Natural killer cell (primary cell): ENCODE measurements at regions of chr4 and their contacts with region 1.

Region 1: GRCh38 chr4:186587416-186588018 is 32.1 kb upstream of the MTNR1A start:
- DNase-seq: peak; percentile 25 to 69
- ATAC-seq: peak in 2 of 3 donors; percentile 58 to 71
- H3K4me3 ChIP-seq: no peak overlapping the region
- H3K4me3 Mint-ChIP-seq: no peak overlapping the region
- H3K27ac ChIP-seq: no peak overlapping the region
- H3K27ac Mint-ChIP-seq: no peak overlapping the region
- H3K4me1 ChIP-seq: no peaks in the 10 kb centered on the region
- H3K4me1 Mint-ChIP-seq: no peaks in the 10 kb centered on the region
- H3K27me3 ChIP-seq: no peaks in the 10 kb centered on the region
- H3K27me3 Mint-ChIP-seq: no peaks in the 10 kb centered on the region
- CTCF ChIP-seq: peak; percentile 82

Region 2: DNA sequence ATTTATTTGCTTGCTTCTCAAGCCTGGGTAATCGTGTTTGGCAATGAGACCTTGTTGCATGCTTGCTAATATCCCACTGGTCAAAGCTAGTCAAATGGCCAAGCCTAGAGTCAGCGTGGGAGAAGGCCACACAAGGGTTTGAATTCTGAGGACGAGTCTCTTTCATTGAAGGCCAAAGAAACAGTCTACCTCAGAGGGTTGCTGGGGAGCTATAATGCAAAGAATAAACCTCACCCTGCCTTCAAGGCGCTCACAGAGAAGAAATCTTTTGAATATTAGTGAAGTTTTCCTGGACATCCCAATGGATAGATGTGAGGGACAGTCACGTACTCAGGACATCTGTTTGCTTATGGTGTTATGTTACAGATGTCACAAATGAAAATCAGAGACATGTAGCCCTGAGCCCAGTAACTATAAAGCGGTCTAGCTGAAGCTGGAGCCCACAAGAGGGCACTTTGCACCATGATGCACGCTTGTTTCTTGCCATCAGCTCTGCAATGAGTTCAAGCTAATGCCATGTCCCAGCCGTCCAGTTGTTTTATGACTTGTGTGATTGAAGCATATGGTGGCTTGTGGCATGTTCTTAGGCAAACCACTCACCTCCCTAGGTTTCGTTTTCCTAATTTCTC is 519.6 kb before region 1 on chr4:
- intact Hi-C with region 1: loop called (anchors 1 kb)
- DNase-seq: peak; percentile 25 to 60
- ATAC-seq: peak; percentile 75 to 89 (median 86)
- H3K4me3 ChIP-seq: peak overlapping the region; percentile 42
- H3K4me3 Mint-ChIP-seq: peak overlapping the region; percentile 83
- H3K27ac ChIP-seq: no peak overlapping the region
- H3K27ac Mint-ChIP-seq: peak overlapping the region; percentile 73 to 77
- H3K4me1 ChIP-seq: peaks cover 13% of the 10 kb centered on the region
- H3K4me1 Mint-ChIP-seq: peaks cover 37 to 40% of the 10 kb centered on the region in 2 donors
- H3K27me3 ChIP-seq: no peaks in the 10 kb centered on the region
- H3K27me3 Mint-ChIP-seq: no peaks in the 10 kb centered on the region
- CTCF ChIP-seq: no peak

Region 3: GRCh38 chr4:186297013-186297645 is 290.4 kb before region 1 on chr4:
- intact Hi-C with region 1: loop called (anchors 2 kb)
- DNase-seq: peak in 1 of 2 donors; percentile 31
- ATAC-seq: no peak
- H3K4me3 ChIP-seq: no peak overlapping the region
- H3K4me3 Mint-ChIP-seq: no peak overlapping the region
- H3K27ac ChIP-seq: no peak overlapping the region
- H3K27ac Mint-ChIP-seq: no peak overlapping the region
- H3K4me1 ChIP-seq: no peaks in the 10 kb centered on the region
- H3K4me1 Mint-ChIP-seq: no peaks in the 10 kb centered on the region
- H3K27me3 ChIP-seq: peaks cover 6% of the 10 kb centered on the region
- H3K27me3 Mint-ChIP-seq: peaks cover 9 to 21% of the 10 kb centered on the region in 2 donors
- CTCF ChIP-seq: peak; percentile 35

Region 4: DNA sequence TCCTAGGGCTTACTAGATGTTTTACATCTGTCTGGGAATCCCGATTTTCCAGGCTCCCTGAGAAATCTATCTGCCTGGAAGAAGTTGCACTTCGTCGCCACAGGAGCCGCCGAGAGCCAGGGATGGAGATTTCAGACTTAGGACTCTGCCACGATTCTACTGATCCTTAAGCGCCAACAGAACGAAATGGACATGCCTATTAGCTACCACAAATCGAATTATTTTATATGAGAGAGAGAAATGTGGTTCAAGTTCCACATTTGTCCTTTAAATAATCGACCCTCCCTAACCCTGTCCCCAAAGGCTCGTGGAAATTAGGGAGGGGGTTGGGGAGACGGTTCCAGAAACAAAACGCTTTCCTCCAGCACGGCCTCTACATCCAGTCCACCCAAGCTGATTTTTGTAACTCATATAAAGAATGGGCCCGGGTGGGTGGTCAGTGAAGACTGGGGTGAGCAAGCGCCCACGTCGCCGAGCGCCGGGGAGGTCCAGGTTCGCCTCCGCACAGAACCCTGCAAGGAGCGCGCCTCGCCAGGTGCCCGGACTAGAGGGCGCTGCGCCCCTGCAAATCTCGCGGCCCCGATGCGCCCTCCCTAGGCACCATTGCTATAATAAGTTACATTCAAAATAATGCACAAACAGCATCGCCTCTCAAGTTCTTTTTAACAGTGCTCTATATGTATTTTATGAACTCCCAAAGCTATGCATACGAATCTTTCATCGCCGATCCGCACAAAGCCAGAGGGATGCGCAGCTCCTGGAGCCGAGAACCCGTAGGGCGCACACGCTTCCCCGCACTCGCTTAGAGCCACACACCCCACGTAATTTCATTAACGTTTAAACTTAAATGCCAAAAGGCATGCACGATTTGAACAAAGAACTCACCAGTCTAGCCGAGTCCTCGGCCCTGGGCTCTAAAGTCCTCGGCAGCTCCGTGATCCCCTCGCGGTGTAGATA is 138.2 kb after region 1 on chr4:
- intact Hi-C with region 1: no loop called
- DNase-seq: no peak
- ATAC-seq: no peak
- H3K4me3 ChIP-seq: no peak overlapping the region
- H3K4me3 Mint-ChIP-seq: no peak overlapping the region
- H3K27ac ChIP-seq: no peak overlapping the region
- H3K27ac Mint-ChIP-seq: no peak overlapping the region
- H3K4me1 ChIP-seq: no peaks in the 10 kb centered on the region
- H3K4me1 Mint-ChIP-seq: no peaks in the 10 kb centered on the region
- H3K27me3 ChIP-seq: peaks cover 38% of the 10 kb centered on the region
- H3K27me3 Mint-ChIP-seq: peaks cover 31 to 35% of the 10 kb centered on the region in 2 donors
- CTCF ChIP-seq: no peak